A673 (cell line): ENCODE measurements at regions of chr12 and their contacts with region 1.

Region 1: GRCh38 chr12:132414634-132415326 is 75.2 kb upstream of the FBRSL1 start:
- DNase-seq: peak; percentile 88
- H3K4me3 ChIP-seq: no peak overlapping the region
- H3K27ac ChIP-seq: no peak overlapping the region
- H3K4me1 ChIP-seq: peaks cover 7% of the 10 kb centered on the region
- H3K27me3 ChIP-seq: peaks cover 15% of the 10 kb centered on the region
- CTCF ChIP-seq: peak; percentile 96

Region 2: DNA sequence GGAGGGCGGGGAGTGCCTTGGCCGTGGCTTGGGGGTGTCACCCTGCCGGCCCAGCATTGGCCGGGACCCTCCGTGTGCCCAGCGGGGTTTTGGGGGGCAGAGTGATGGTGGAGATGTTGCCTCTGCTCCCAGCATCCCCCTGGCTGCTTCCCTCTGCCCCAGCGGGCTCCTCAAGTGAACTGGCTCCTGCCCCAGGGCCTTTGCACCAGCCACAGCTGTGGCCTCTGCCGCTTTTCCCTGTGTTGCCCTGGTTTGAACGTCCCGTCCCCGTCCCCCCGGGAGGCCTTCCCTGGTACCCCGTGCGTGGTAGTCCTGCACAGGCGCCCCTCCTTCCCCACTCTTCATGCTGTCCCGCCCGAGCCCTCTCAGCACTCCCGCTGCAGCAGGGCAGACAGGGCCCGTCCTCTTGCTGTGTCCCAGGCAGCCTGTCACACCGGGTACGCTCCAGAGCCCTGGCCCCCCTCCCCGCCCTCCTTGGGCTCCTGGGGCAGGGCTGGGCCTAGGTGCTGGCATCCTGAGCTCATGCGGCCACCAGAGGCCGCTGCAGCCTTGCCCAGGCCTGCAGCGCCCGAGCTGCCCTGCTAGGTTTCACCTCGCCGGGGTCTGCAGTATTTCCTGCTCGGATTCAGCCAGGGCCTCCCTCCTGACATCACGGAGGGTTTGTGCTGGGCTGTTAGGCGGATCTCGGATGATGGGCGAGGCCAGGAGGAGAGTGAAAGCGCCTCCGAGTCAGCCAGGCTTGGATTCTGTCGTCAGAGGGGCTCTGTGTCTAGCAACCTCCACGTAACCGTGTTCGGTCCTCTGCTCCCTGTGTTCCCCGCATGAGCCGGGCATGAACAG is 261.1 kb before region 1 on chr12:
- CTCF ChIA-PET with region 1: interaction called, 39 read pairs
- POLR2A ChIA-PET with region 1: no interaction called
- intact Hi-C with region 1: loop called (anchors 1 kb)
- DNase-seq: peak; percentile 89
- H3K4me3 ChIP-seq: no peak overlapping the region
- H3K27ac ChIP-seq: no peak overlapping the region
- H3K4me1 ChIP-seq: no peaks in the 10 kb centered on the region
- H3K27me3 ChIP-seq: no peaks in the 10 kb centered on the region
- CTCF ChIP-seq: peak; percentile 97

Region 3: GRCh38 chr12:132560614-132561426 is 146.0 kb after region 1 on chr12:
- CTCF ChIA-PET with region 1: interaction called, 14 read pairs
- POLR2A ChIA-PET with region 1: no interaction called
- intact Hi-C with region 1: loop called (anchors 1 kb)
- DNase-seq: peak; percentile 93
- H3K4me3 ChIP-seq: peak overlapping the region; percentile 77
- H3K27ac ChIP-seq: peak overlapping the region; percentile 85
- H3K4me1 ChIP-seq: peaks cover 7% of the 10 kb centered on the region
- H3K27me3 ChIP-seq: no peaks in the 10 kb centered on the region
- CTCF ChIP-seq: peak; percentile 96

Region 4: DNA sequence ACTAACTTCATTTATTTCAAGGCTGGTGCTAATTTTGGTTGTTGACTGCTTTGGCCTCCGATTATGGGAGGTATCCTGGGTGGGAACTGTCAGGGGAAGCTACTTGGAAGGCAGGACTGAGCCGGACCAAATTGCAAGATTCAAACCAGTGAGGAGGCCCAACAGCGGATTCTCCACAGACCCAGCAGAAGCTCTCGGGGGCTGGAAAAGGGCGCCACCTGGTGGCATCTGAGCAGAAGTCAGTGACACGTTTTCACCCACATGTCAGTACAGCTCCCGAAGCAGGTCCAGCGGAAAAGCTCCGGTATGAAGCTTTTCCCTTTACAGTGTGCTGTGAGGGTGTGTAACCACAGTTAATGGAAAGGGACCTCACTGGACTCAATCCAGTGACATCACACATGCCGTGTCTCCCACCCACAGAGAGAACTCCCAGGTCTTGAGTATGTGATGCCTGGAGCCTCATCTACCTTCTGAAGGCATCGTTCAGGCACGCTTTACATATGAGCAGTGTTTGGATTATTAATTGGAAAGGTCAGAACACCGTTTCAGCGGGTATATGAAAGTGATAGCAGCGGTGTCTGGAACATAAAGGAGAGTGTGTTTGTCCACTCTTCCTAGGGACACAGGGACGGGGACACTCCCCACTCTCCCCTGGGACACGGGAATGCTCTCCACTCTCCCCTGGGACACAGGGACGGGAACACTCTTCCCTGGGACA is 200.2 kb after region 1 on chr12:
- CTCF ChIA-PET with region 1: interaction called, 22 read pairs
- POLR2A ChIA-PET with region 1: no interaction called
- intact Hi-C with region 1: loop called (anchors 1 kb)
- DNase-seq: peak; percentile 92
- H3K4me3 ChIP-seq: no peak overlapping the region
- H3K27ac ChIP-seq: no peak overlapping the region
- H3K4me1 ChIP-seq: peaks cover 5% of the 10 kb centered on the region
- H3K27me3 ChIP-seq: peaks cover 37% of the 10 kb centered on the region
- CTCF ChIP-seq: peak; percentile 95